Endothelial cell of umbilical vein (primary cell): ENCODE measurements at regions of chrX and their contacts with region 1.

Region 1: DNA sequence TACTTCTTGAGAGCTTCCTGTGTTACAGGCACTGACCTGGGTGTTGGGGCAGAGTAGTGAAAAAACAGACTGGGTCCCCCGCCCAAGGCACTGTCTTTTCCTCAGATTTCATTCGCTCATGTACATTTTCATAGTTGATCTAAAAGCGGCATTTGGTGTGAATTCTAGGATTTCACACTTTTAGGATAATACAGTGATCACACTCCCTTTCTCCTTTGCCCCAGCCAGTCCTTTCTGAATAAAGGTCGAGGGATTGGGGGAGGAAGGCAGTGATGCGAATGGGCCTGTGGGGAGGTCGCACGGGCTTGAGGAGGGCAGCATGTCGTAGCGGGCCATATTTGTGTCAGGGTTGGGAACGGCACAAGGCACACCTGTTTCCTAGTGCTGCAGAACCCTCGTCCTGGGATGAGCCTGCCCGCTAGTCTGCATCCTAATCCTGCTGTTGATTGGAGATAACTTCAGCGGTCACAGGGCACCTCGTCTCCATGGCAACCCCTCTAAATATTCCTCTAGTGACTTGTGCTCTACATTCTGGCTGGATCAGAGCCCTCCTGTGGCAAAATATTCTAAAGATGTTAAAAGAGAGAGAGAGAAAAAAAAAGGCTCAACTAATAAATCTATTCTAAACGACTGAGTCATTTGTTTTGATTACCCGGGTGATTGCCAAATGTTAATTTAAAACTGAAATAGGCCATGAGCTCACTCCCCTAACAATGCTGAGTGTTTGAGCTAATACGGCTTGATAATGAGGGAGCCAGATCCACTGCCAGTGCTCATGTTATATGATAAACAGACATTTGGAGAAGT is 21.8 kb downstream of the FHL1 start:
- DNase-seq: peak; percentile 92
- H3K4me3 ChIP-seq: no peak overlapping the region
- H3K27ac ChIP-seq: peak overlapping the region; percentile 64
- H3K4me1 ChIP-seq: peaks cover 19% of the 10 kb centered on the region
- H3K27me3 ChIP-seq: no peaks in the 10 kb centered on the region
- CTCF ChIP-seq: no peak
- POLR2A ChIP-seq: no peak

Region 2: GRCh38 chrX:136065044-136065671 is 104.0 kb before region 1 on chrX:
- CTCF ChIA-PET with region 1: interaction called, 4 read pairs
- POLR2A ChIA-PET with region 1: no interaction called
- dilution Hi-C with region 1: no loop called
- intact Hi-C with region 1: loop called (anchors 1 kb)
- DNase-seq: peak; percentile 84
- H3K4me3 ChIP-seq: no peak overlapping the region
- H3K27ac ChIP-seq: peak overlapping the region; percentile 36
- H3K4me1 ChIP-seq: peaks cover 17% of the 10 kb centered on the region
- H3K27me3 ChIP-seq: peaks cover 0 to 2% of the 10 kb centered on the region in 2 experiments
- CTCF ChIP-seq: no peak
- POLR2A ChIP-seq: no peak

Region 3: GRCh38 chrX:136185409-136186022 is 16.4 kb after region 1 on chrX:
- CTCF ChIA-PET with region 1: interaction called, 7 read pairs
- POLR2A ChIA-PET with region 1: no interaction called
- dilution Hi-C with region 1: no loop called
- intact Hi-C with region 1: loop called (anchors 2 kb)
- DNase-seq: peak; percentile 66
- H3K4me3 ChIP-seq: no peak overlapping the region
- H3K27ac ChIP-seq: peak overlapping the region; percentile 72
- H3K4me1 ChIP-seq: peaks cover 33% of the 10 kb centered on the region
- H3K27me3 ChIP-seq: no peaks in the 10 kb centered on the region
- CTCF ChIP-seq: no peak
- POLR2A ChIP-seq: no peak

Region 4: DNA sequence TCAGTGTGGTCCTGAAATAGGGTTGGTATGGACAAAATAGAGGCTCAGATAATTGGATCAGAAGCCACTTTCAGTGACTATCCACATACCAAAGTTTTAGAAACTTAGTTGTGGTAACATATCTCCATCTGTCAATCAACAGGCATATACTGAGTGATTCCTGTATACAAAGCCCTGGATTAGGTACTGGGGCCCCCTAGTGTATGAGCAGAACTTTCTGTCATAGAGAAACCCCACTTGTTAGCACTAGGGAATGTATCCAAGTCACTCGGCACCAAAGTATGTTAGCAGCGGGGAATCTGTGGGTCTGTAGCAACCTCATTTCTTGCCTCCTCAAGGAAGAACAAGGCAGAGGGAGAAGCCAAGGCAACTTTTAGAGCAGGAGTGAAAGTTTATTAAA is 31.3 kb after region 1 on chrX:
- CTCF ChIA-PET with region 1: interaction called, 9 read pairs
- POLR2A ChIA-PET with region 1: no interaction called
- dilution Hi-C with region 1: no loop called
- intact Hi-C with region 1: loop called (anchors 1 kb)
- DNase-seq: peak; percentile 45
- H3K4me3 ChIP-seq: no peak overlapping the region
- H3K27ac ChIP-seq: no peak overlapping the region
- H3K4me1 ChIP-seq: peaks cover 13% of the 10 kb centered on the region
- H3K27me3 ChIP-seq: no peaks in the 10 kb centered on the region
- CTCF ChIP-seq: peak; percentile 18 to 34
- POLR2A ChIP-seq: no peak

Region 5: DNA sequence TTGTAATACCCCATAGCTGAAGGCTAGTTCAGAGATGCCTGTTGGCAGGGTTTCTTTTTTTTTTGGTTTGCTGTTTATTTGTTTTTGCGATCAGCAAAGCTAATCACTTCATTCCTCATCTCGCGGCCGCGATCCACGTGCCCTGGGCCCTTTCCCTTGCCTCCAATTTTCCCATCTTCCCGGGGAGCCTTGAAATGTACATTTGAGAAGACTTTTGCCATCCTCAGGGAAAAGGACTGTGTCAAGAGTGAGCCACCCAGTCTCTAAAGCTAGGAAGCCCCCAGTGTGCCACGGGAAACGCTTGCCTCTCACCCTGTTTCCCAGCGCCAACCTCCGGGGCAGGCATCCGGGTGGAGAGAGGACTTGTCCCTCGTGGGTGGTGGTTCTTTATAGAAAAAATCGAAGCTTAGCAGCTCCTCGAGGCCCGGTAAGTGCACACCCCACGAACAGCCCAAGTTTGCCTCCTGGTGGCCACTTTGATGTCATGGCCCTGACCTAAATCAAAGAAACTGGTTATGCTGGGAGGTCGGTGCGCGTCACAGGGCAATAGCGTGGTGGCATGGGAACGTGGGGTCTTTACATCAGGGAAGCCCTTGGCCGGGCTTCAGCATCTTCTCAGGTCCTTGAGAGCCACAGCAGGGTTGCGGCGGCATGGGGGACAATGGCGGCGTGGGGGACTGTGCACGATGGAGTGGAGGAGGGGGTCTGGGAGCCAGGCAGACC is 40.0 kb after region 1 on chrX:
- CTCF ChIA-PET with region 1: interaction called, 98 read pairs
- POLR2A ChIA-PET with region 1: no interaction called
- dilution Hi-C with region 1: no loop called
- intact Hi-C with region 1: loop called (anchors 1 kb)
- DNase-seq: peak; percentile 55
- H3K4me3 ChIP-seq: no peak overlapping the region
- H3K27ac ChIP-seq: no peak overlapping the region
- H3K4me1 ChIP-seq: peaks cover 6% of the 10 kb centered on the region
- H3K27me3 ChIP-seq: no peaks in the 10 kb centered on the region
- CTCF ChIP-seq: peak; percentile 36 to 62
- POLR2A ChIP-seq: no peak

Region 6: GRCh38 chrX:136227948-136228838 is 59.1 kb after region 1 on chrX:
- CTCF ChIA-PET with region 1: no interaction called
- POLR2A ChIA-PET with region 1: no interaction called
- dilution Hi-C with region 1: no loop called
- intact Hi-C with region 1: no loop called
- DNase-seq: no peak
- H3K4me3 ChIP-seq: no peak overlapping the region
- H3K27ac ChIP-seq: no peak overlapping the region
- H3K4me1 ChIP-seq: peaks cover 3% of the 10 kb centered on the region
- H3K27me3 ChIP-seq: no peaks in the 10 kb centered on the region
- CTCF ChIP-seq: no peak
- POLR2A ChIP-seq: no peak

Region 7: GRCh38 chrX:136246201-136246600 is 77.1 kb after region 1 on chrX:
- CTCF ChIA-PET with region 1: no interaction called
- POLR2A ChIA-PET with region 1: no interaction called
- dilution Hi-C with region 1: no loop called
- intact Hi-C with region 1: no loop called
- DNase-seq: no peak
- H3K4me3 ChIP-seq: no peak overlapping the region
- H3K27ac ChIP-seq: no peak overlapping the region
- H3K4me1 ChIP-seq: peaks cover 9% of the 10 kb centered on the region
- H3K27me3 ChIP-seq: no peaks in the 10 kb centered on the region
- CTCF ChIP-seq: no peak
- POLR2A ChIP-seq: no peak